ENCODE measurements at regions of chr10 and their contacts with region 1.

Region 1: GRCh38 chr10:103476046-103476995 is 2.7 kb downstream of the CALHM3 start:
- DNase-seq: peak; percentile 75
- CTCF ChIP-seq: peak; percentile 66

Region 2: DNA sequence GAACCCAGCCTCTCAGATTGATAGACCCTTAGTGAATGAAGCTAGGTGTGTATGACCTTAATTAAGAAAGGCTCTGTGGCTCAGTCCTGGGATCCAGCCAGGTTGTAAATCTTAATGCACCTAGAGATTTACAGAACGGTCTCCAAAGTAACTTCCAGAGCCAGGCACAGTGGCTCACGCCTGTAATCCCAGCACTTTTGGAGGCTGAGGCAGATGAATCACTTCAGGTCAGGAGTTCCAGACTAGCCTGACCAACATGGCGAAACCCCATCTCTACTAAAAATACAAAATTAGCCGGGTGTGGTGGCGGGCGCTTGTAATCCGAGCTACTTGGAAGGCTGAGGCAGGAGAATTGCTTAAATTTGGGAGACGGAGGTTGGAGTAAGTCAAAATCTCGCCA is 48.5 kb before region 1 on chr10:
- CTCF ChIA-PET with region 1: interaction called, 14 read pairs
- POLR2A ChIA-PET with region 1: no interaction called
- DNase-seq: no peak
- CTCF ChIP-seq: no peak

Region 3: GRCh38 chr10:103451831-103452505 is 24.4 kb before region 1 on chr10 and contains the start of gene CALHM2:
- CTCF ChIA-PET with region 1: interaction called, 42 read pairs
- POLR2A ChIA-PET with region 1: no interaction called
- DNase-seq: peak; percentile 89
- CTCF ChIP-seq: no peak

Region 4: DNA sequence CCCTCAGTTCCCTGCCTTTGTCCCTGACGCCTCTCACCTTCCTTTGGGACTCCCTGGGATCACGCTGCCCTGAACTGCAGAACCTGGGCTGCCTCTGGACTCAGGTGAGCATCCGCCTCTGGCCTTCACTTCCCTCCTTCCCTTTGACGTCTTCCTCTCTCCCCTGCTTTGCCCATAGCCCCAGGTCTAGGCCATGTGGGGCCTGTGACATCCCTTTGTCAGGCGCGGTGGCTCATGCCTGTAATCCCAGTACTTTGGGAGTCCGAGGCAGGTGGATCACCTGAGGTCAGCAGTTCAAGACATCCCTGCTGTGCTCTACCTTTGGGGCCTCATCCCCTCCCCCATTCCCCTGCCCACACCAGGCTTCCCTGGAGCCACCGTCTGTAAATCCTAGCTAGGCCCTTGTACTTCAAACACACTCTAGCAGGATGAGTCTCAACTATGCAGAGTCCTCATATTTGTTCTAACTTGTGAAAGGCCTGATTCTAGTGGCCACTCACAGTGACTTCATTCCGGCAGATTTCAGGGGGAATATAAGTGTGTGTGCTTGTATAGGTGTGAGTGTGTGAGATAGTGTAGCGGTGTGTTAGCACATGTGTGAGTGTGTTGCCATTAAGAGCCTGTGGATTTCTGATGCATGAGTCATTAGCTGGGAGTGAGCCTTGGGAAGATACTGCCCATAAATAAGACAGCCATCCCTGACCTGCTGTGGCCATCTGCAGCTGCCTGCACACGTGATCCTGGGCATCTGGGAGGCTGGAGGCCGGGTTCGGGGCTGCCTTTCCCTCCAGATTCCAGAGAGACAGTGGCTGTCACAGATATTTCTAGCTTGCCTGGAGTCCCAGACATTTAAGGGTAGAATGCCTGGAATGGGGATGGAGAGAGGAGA is 15.4 kb after region 1 on chr10:
- CTCF ChIA-PET with region 1: interaction called, 16 read pairs
- POLR2A ChIA-PET with region 1: no interaction called
- DNase-seq: no peak
- CTCF ChIP-seq: no peak